Activated CD8-positive, alpha-beta T cell treated with anti-CD3 and anti-CD28 coated beads for 36 hours (primary cell): ENCODE measurements at regions of chr2 and their contacts with region 1.

Region 1: DNA sequence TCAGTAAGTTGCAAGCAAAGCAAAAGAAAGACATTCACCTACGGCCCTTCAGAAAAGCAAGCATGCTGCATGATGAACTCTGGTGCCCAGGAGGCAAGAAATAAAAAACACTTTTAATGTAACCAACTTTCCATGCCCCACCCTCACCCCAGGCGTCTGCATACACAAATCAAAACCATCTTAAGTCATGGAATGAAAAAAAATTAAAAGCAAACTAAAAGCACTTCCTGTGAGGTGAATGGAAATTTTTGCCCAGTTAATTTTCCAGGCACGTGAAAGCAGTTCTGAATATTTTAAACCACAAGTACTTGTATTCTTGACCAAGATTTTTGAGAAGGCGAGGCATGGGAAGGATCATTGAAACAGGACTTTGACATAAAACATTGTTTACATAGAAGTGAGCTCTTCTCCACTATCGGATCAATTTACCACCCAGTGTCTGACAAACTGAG is 2.5 kb upstream of the ICOS start:
- DNase-seq: peak; percentile 81
- ATAC-seq: peak; percentile 50
- H3K4me3 Mint-ChIP-seq: peak overlapping the region; percentile 60
- H3K27ac Mint-ChIP-seq: peak overlapping the region; percentile 95
- H3K4me1 Mint-ChIP-seq: peaks cover 58% of the 10 kb centered on the region
- H3K27me3 Mint-ChIP-seq: no peaks in the 10 kb centered on the region
- CTCF ChIP-seq: no peak

Region 2: DNA sequence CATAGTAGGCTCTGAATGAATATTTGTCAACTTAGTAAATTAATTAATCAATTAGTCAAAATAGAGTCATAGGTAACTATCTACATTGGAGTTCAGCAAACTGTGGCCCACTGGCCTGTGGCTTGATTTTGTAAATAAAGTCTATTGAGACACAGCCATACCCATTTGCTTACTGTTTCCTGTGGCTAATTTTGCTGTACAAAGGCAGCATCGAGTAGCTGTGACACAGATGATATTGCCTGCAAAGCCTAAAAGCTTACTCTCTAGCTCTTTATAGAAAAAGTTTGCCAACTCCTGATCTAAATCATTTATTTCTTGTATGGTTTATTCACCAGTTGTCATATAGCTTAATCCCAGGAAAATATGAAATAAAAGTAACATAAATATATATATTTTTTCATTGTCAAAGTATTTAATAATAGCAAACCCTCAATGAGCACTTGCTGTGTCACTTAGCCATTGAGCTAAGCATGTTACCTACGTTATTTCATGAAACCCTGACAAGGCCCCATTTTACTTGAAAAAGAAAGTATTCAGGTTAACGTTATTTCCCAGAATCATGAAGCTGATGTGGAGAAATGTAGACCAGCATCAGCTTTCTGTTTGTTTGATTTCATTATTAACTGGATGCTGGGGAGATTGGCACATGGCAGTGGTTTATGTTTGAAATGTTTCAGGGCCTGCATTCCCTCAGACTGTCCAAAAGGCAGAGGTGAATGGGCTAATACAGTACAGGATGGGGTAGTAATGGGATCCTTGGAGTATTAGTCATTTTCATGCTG is 72.1 kb after region 1 on chr2:
- CTCF ChIA-PET with region 1: interaction called, 4 read pairs
- POLR2A ChIA-PET with region 1: interaction called, 14 read pairs
- intact Hi-C with region 1: loop called (anchors 5 kb)
- DNase-seq: no peak
- ATAC-seq: peak; percentile 68
- H3K4me3 Mint-ChIP-seq: no peak overlapping the region
- H3K27ac Mint-ChIP-seq: peak overlapping the region; percentile 92
- H3K4me1 Mint-ChIP-seq: peaks cover 80% of the 10 kb centered on the region
- H3K27me3 Mint-ChIP-seq: no peaks in the 10 kb centered on the region
- CTCF ChIP-seq: no peak

Region 3: DNA sequence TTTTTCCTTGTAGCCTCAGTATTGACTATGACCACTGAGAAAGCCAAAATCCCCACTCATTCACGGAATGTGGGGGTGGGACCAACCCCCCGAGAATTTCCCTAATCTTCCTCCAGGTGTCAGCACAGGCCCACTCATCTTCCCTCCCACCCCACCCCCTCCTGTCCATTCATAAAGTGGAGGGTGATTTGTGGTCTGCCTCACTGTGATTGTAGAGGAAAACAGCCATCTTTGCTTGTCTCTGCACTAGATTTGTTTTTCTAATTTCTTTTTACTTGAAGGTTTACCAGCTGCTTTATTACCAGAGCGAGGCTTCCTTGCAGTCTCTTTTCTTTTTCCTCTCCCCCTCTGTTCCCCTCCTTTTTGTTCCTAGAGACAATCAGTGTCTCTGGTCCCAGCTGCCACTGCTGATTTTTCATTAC is 174.3 kb after region 1 on chr2:
- CTCF ChIA-PET with region 1: interaction called, 5 read pairs
- POLR2A ChIA-PET with region 1: no interaction called
- intact Hi-C with region 1: loop called (anchors 5 kb)
- DNase-seq: peak; percentile 73
- ATAC-seq: peak; percentile 49
- H3K4me3 Mint-ChIP-seq: peak overlapping the region; percentile 62
- H3K27ac Mint-ChIP-seq: peak overlapping the region; percentile 92
- H3K4me1 Mint-ChIP-seq: peaks cover 78% of the 10 kb centered on the region
- H3K27me3 Mint-ChIP-seq: peaks cover 4% of the 10 kb centered on the region
- CTCF ChIP-seq: peak; percentile 89